ENCODE measurements at regions of chr19 and their contacts with region 1.

Region 1: DNA sequence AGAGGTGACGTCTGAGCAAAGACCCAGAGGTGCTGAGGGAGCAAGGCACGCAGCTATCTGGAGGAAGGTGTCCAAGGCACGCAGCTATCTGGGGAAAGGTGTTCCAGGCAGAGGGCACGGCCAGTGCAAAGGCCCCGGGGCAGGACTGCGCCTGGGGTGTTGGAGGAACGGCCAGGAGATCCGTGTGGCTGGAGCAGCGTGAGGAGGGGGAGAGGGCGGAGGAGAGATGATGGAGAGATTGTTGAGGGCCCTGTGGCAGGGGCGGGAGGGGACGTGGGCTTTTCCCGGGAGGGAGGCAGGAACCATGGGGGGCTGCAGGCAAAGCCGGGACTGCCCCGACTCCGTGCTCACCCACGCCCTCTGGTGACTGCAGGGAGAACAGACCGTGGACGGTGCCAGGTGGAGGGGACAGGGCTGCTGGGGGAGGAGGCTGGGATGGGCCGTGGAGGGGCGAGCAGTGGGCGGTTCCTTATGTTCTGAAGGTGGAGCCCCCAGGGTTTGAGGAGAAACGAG is 13.3 kb upstream of the MISP start:
- DNase-seq: no peak
- ATAC-seq: peak; percentile 29

Region 2: DNA sequence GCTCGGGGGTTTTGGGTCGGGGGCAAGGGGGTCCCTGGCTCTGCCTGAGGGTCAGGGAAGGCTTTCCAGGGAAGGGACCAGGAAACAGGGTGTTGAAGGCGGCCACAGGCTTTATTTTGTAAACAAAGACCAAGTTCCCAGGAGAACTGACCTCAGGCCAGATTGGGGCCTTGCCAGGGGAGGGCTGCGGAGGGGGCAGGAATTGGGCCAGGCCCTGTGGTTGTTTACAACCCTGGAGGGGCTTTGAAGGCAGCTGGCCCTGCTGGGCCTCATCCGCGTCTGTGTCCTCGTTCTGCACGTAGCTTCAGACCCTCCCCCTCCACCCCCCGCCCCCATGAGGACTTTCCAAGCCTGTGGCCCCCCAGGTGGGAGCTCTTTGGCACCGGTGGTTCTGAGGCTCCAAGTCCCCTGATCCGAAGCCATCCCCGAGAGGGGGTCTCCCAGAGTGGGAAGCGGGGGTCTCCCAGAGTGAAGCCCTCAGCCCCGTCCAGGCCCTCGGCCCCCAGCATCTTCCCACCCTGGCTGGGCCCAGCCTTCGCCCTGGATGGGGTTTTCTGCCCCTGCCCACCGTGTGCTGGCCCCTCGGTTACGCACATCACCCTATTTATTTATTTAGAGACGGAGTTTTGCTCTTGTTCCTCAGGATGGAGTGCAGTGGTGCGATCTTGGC is 178.7 kb before region 1 on chr19:
- intact Hi-C with region 1: loop called (anchors 10 kb)
- DNase-seq: peak; percentile 62
- ATAC-seq: peak; percentile 50

Region 3: GRCh38 chr19:588093-588740 is 149.4 kb before region 1 on chr19:
- intact Hi-C with region 1: loop called (anchors 10 kb)
- DNase-seq: peak; percentile 80
- ATAC-seq: peak; percentile 11

Region 4: DNA sequence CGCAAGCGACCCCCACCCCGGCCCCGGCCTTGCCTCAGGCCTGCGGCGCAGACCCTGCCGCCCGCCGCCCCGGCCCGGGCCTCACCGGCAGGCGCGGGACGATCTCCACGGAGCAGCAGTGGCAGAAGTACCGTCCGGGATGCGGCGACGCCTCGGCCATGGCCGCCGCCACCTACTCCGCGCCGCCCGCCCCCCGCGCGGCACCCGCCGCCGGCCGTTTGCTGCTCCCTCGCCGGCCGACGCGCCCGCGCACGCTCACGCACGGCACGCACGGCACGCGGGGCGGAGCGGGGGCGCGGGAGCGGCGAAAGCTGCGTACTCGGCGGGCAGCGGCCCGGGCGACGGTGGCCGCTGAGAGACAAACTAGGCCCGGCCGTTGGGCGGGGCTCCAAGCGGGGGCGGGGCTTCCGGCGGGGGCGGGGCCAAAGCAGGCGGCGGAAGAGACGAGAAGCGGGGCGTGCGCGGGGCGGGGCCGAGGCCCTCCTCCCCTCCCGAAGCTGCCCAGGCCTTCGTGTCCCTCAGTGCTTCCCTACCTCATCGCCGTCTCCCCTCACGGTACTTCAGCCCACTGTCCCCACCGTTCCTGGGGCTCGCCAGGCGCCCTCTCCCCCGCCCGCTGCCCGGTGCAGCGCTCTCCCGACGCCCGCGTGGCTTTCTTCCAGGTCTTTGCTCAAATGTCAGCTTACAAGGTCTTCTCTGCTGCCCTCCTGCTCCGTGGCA is 74.5 kb before region 1 on chr19 and contains the start of gene RNF126:
- intact Hi-C with region 1: loop called (anchors 1 kb)
- DNase-seq: peak; percentile 96
- ATAC-seq: peak; percentile 91
- total RNA-seq, gene RNF126: 19.7 TPM

Region 5: DNA sequence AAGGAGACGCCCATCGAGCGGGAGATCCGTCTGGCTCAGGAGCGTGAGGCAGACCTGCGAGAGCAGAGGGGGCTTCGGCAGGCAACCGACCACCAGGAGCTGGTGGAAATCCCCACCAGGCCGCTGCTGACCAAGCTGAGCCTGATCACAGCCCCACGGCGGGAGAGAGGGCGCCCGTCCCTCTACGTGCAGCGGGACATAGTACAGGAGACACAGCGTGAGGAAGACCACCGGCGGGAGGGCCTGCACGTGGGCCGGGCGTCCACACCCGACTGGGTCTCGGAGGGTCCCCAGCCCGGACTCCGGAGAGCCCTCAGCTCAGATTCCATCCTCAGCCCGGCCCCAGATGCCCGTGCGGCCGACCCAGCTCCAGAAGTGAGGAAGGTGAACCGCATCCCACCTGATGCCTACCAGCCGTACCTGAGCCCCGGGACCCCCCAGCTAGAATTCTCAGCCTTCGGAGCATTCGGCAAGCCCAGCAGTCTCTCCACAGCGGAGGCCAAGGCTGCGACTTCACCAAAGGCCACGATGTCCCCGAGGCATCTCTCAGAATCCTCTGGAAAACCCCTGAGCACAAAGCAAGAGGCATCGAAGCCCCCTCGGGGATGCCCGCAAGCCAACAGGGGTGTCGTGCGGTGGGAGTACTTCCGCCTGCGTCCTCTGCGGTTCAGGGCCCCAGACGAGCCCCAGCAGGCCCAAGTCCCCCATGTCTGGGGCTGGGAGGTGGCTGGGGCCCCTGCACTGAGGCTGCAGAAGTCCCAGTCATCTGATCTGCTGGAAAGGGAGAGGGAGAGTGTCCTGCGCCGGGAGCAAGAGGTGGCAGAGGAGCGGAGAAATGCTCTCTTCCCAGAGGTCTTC is 20.4 kb after region 1 on chr19:
- intact Hi-C with region 1: no loop called
- DNase-seq: peak; percentile 48
- ATAC-seq: no peak

Region 6: GRCh38 chr19:782185-782877 is 44.7 kb after region 1 on chr19:
- intact Hi-C with region 1: no loop called
- DNase-seq: peak; percentile 67
- ATAC-seq: peak; percentile 20